A673 (cell line): ENCODE measurements at regions of chr2 and their contacts with region 1.

Region 1: GRCh38 chr2:121722479-121722878 is 14.2 kb downstream of the NIFK start:
- DNase-seq: no peak
- H3K4me3 ChIP-seq: no peak overlapping the region
- H3K27ac ChIP-seq: no peak overlapping the region
- H3K4me1 ChIP-seq: no peaks in the 10 kb centered on the region
- H3K27me3 ChIP-seq: no peaks in the 10 kb centered on the region
- CTCF ChIP-seq: no peak

Region 2: GRCh38 chr2:121080013-121080772 is 642.3 kb before region 1 on chr2:
- CTCF ChIA-PET with region 1: no interaction called
- POLR2A ChIA-PET with region 1: no interaction called
- intact Hi-C with region 1: loop called (anchors 5 kb)
- DNase-seq: peak; percentile 72
- H3K4me3 ChIP-seq: no peak overlapping the region
- H3K27ac ChIP-seq: no peak overlapping the region
- H3K4me1 ChIP-seq: no peaks in the 10 kb centered on the region
- H3K27me3 ChIP-seq: no peaks in the 10 kb centered on the region
- CTCF ChIP-seq: peak; percentile 86

Region 3: GRCh38 chr2:121400201-121400600 is 322.3 kb before region 1 on chr2:
- CTCF ChIA-PET with region 1: interaction called, 9 read pairs
- POLR2A ChIA-PET with region 1: no interaction called
- intact Hi-C with region 1: loop called (anchors 1 kb)
- DNase-seq: no peak
- H3K4me3 ChIP-seq: no peak overlapping the region
- H3K27ac ChIP-seq: no peak overlapping the region
- H3K4me1 ChIP-seq: no peaks in the 10 kb centered on the region
- H3K27me3 ChIP-seq: no peaks in the 10 kb centered on the region
- CTCF ChIP-seq: no peak

Region 4: GRCh38 chr2:121505005-121505404 is 217.5 kb before region 1 on chr2:
- CTCF ChIA-PET with region 1: no interaction called
- POLR2A ChIA-PET with region 1: no interaction called
- intact Hi-C with region 1: no loop called
- DNase-seq: no peak
- H3K4me3 ChIP-seq: no peak overlapping the region
- H3K27ac ChIP-seq: no peak overlapping the region
- H3K4me1 ChIP-seq: peaks cover 31% of the 10 kb centered on the region
- H3K27me3 ChIP-seq: no peaks in the 10 kb centered on the region
- CTCF ChIP-seq: no peak

Region 5: GRCh38 chr2:121539750-121540469 is 182.6 kb before region 1 on chr2:
- CTCF ChIA-PET with region 1: no interaction called
- POLR2A ChIA-PET with region 1: no interaction called
- intact Hi-C with region 1: loop called (anchors 2 kb)
- DNase-seq: no peak
- H3K4me3 ChIP-seq: no peak overlapping the region
- H3K27ac ChIP-seq: no peak overlapping the region
- H3K4me1 ChIP-seq: no peaks in the 10 kb centered on the region
- H3K27me3 ChIP-seq: no peaks in the 10 kb centered on the region
- CTCF ChIP-seq: no peak

Region 6: DNA sequence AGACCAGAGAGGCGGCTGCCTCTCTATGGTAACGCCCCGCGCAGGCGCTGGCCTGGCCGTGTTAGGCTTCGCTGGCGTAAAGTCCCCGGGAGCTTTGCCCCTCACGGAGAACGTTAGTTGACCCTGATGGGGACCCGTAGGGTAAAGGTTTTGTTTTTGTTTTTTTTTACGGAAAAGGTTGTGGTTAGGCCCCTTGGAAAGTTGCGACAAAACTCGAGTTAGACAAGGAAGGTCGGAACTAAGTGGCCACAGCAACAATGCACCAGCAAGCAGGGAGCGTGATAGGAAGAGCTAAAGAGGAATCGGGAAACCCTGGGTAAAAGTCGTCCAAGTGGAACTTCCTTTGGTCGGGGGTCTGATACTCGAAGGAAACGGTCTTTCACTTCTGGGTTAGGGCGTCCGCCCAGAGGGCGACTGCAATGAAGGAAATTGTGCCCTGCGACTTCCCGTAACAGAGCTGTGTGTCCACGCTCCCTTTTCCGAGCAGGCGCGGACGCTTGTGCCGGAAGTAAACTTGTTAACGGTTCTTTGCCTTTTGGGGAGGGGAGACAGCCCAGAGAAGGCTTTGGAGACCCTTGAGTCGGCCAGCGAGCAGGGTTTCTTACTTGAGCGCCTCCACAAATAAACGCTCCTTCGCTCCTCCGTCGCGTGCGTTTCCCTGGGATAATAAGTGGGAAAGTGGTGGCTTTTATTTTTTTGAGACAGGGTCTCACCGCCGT is 72.7 kb before region 1 on chr2:
- CTCF ChIA-PET with region 1: no interaction called
- POLR2A ChIA-PET with region 1: no interaction called
- intact Hi-C with region 1: no loop called
- DNase-seq: peak; percentile 99
- H3K4me3 ChIP-seq: peak overlapping the region; percentile 97
- H3K27ac ChIP-seq: peak overlapping the region; percentile 93
- H3K4me1 ChIP-seq: peaks cover 5% of the 10 kb centered on the region
- H3K27me3 ChIP-seq: no peaks in the 10 kb centered on the region
- CTCF ChIP-seq: no peak